Activated CD4-positive, alpha-beta T cell treated with anti-CD3 and anti-CD28 coated beads, Interleukin-2, amount 10 ng/mL, durations not matched to agents 24 days and 14 days (primary cell): ENCODE measurements at regions of chr20 and their contacts with region 1.

Region 1: GRCh38 chr20:44552950-44553908 is 29.1 kb upstream of the PKIG start:
- DNase-seq: no peak
- H3K4me3 Mint-ChIP-seq: peak overlapping the region; percentile 37
- H3K27ac Mint-ChIP-seq: peak overlapping the region; percentile 81
- H3K4me1 Mint-ChIP-seq: peaks cover 16% of the 10 kb centered on the region
- H3K27me3 Mint-ChIP-seq: peaks cover 1% of the 10 kb centered on the region

Region 2: DNA sequence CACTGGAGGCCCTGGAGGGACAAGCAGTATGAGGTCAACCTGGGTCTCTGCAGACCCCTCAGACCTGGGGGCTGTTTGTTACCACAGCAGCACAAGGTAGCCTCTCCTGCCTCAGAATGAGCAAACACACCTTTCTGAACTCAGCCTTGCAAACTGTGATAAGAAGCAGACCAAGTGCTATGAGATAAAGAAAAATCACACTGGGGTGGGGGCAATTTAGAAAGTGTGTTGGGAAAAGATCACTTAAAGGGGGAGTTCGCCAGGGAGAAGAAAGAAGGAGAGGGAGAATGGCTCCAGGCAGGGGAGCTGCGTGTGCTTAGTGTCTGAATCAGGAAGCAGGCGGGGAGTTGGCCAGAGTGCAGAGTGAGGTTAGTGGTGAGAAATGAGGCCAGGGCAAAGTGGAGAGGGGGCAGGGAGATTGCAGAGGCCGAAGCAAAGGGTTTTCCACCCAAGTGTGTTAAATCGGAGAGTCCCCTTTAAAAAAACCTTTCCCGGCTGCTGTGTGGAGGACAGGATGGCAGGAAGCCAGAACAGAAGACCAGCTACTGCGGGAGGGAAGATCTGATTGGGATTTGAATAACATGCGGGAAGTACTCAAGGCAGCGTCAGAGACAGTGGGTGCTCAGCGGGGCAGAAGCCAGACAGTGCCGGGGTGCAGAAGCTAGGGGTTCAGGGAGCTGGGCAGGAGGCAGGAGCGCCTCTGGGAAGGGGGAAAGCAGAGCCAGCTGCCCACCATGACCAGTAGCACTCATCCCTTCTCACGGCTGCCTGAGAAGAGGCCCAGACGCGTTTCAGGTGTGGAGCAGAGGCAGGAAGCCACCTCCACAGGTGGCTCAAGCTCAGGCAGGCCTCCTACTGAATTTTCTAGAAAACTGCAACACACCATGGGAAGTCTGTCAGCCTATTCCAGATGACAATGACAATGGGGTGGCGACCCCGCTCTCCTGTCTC is 89.2 kb after region 1 on chr20:
- intact Hi-C with region 1: loop called (anchors 1 kb)
- DNase-seq: peak; percentile 77
- H3K4me3 Mint-ChIP-seq: peak overlapping the region; percentile 69
- H3K27ac Mint-ChIP-seq: peak overlapping the region; percentile 92
- H3K4me1 Mint-ChIP-seq: peaks cover 59% of the 10 kb centered on the region
- H3K27me3 Mint-ChIP-seq: no peaks in the 10 kb centered on the region